Activated CD4-positive, alpha-beta memory T cell treated with anti-CD3 and anti-CD28 coated beads for 36 hours (primary cell): ENCODE measurements at regions of chr3 and their contacts with region 1.

Region 1: DNA sequence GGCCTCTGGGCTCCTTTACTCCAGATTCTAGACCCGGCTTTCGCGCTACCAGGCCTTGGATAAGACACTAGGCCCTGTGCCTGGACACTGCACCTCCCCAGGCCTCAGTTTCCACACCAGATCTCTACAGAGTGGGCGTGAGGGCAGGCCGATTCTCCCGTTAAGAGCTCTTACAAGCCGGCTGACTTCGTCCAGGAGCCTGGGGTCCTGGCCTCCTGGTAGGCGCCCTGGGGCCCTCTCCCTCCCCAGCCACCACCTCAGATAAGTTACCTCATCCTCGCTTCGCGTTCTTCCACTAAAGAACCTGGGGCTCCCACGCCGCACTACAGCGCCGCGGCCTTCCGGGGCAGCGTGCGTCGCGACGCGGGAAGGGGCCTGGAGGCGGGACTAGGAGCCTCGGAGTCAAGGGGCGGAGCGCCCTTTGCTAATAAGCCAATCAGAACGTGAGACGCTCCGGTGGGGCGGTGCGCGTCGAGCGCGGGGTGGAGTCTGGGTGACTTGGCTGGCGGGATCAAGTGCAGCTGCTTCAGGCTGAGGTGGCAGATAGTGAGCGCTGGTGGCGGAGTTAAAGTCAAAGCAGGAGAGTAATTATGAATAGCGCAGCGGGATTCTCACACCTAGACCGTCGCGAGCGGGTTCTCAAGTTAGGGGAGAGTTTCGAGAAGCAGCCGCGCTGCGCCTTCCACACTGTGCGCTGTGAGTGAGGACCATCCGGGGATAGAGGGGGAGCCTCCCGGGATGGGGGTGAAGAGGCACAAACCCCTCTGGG is at the starts of genes EAF2 and IQCB1:
- DNase-seq: peak; percentile 98
- H3K4me3 Mint-ChIP-seq: peak within 1 kb of the TSS; percentile 98
- H3K27ac Mint-ChIP-seq: peak within 1 kb of the TSS; percentile 84
- H3K4me1 Mint-ChIP-seq: peaks cover 37% of the 10 kb centered on the region
- H3K27me3 Mint-ChIP-seq: no peaks in the 10 kb centered on the region
- total RNA-seq, gene EAF2: 14.4 to 14.8 TPM
- total RNA-seq, gene IQCB1: 36.8 to 37.3 TPM

Region 2: GRCh38 chr3:120742198-120742849 is 1092.6 kb before region 1 on chr3 and contains the starts of genes GTF2E1 and RABL3:
- CTCF ChIA-PET with region 1: no interaction called
- POLR2A ChIA-PET with region 1: no interaction called
- intact Hi-C with region 1: loop called (anchors 2 kb)
- DNase-seq: peak; percentile 98
- H3K4me3 Mint-ChIP-seq: peak within 1 kb of the TSS; percentile 96
- H3K27ac Mint-ChIP-seq: peak within 1 kb of the TSS; percentile 94
- H3K4me1 Mint-ChIP-seq: peaks cover 28% of the 10 kb centered on the region
- H3K27me3 Mint-ChIP-seq: peaks cover 2% of the 10 kb centered on the region
- total RNA-seq, gene GTF2E1: 18.4 to 19.8 TPM
- total RNA-seq, gene RABL3: 28.7 to 30.0 TPM

Region 3: DNA sequence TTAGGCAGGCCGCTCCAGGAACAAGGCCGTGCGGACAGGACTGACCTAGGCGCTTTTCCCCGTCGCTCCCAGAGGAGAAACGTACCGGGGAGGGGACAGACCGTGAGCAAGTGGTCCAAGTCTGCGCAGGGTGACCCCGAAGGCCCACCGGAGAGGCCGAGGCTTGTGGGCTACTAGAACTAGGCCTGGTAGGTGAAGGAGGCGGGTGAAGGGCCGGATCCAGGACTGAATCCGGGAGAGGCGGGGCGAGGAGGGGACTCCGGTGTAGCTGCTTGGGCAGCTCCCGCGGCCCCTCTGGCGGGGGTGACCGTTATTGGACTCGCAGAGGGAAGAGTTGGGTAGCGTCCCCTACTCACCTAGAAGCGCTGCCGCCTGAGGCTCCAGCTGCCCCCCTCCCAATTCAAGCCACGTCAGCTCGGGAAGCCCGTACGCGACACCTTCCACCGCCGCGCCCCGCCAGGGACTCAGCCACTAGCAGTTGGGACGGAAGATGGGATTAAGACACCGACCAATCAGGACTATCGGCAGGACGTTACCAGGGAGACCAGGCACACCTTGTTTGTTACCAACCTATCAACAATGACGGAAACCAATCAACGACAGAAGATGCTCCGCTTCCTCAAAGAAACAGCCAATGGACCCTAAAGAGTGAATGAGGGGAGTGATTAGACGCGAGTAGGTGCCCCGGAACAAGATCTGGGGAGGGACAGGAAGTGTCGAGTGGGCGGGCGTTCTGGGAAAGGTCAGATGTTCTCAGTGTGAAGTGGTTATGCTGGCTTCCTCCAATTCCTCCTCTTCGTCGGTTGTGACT is 85.4 kb before region 1 on chr3 and contains the start of gene GOLGB1:
- CTCF ChIA-PET with region 1: interaction called, 3 read pairs
- POLR2A ChIA-PET with region 1: interaction called, 7 read pairs
- intact Hi-C with region 1: loop called (anchors 1 kb)
- DNase-seq: peak; percentile 97
- H3K4me3 Mint-ChIP-seq: no peak within 1 kb of the TSS
- H3K27ac Mint-ChIP-seq: no peak within 1 kb of the TSS
- H3K4me1 Mint-ChIP-seq: peaks cover 10% of the 10 kb centered on the region
- H3K27me3 Mint-ChIP-seq: no peaks in the 10 kb centered on the region
- total RNA-seq, gene GOLGB1: 22.7 to 26.0 TPM

Region 4: DNA sequence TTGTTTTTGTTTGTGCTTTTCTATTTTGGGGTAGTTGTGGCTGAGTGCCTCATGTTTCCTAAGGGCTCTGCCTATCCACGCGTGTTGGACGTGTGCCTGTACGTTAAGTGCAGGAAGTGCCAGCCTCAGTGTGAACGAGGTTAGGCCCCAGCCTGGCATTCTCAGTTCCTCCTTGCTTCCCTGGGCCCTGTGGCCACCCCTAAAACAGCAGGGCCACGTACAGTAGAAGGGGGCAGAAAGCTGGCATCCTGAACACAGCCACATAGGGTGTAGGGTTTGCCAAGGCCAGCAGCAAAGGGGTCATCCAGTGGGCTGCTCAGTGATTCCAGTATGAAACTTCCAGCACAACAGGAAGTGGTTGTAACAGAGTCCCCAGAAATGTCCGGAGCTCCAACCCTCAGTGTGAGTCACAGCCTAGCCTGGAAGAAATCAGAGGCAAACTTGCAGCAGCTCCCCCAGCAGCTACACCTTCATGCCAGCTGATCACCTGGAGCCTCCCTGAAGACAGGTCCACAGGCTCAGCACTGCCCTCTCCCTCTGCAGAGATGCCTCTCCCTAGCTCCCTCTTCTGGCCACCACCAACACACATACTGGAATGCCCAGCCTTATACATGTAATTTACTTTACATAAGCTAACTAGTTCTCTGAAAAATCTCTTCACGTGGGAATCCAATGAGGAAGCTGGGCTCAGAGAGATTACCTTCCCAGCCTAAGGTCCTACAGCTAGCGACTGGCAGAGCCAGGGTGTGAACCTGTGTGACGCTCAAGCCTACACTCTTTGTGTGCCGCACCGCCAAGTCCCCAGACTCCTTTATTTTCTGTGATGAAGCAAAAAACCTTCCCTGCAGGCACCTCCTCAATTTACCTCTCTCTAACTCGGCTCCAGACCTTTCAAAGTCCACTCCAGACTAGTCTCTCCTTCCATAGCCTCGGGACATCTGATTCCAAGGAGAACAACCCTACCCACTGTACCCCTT is 160.6 kb after region 1 on chr3:
- CTCF ChIA-PET with region 1: no interaction called
- POLR2A ChIA-PET with region 1: no interaction called
- intact Hi-C with region 1: loop called (anchors 5 kb)
- DNase-seq: peak; percentile 40
- H3K4me3 Mint-ChIP-seq: no peak overlapping the region
- H3K27ac Mint-ChIP-seq: no peak overlapping the region
- H3K4me1 Mint-ChIP-seq: peaks cover 29% of the 10 kb centered on the region
- H3K27me3 Mint-ChIP-seq: no peaks in the 10 kb centered on the region

Region 5: DNA sequence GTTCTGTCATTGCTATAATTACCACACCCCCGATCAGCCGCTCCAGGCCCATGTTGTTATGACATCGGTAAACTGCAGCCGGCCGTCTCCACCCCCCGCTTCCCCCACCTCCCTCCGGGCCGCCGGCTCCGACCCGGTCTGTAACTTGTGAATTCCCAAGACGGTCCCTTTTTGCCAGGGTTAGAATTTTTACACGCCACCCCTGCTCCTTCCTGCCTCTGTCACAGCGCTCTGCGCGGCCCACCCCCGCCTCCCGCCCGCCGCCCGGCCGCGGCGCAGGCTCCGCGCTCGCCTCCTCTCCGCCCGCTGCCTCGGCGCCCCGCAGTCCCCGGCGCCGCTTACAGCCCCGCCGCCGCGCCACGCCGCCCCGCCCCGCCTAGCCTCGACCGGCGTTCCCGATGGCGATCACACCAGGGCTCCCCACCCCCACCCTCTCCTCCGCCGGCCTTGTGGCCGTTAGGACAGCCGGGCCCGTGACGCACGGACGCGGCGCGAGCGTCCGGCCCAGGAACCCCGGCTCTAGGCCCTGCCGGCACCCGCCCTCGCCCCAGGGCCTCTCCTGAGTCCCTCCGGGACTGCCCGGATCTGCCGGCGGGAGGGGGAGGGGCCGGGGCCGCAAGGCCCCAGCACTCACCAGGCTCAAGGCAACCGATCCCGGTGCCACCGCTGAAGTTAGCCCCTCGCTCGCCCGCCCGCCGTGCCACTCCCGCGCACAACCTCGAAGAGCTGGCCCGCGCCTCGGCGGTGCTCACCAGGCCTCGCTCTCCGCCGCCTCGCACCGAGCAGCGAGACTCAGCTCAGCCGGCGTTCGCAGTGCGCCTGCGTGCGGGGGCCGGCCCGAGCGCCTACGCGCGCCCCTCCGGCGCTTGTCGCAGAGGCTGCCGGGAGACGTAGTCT is 679.5 kb after region 1 on chr3 and contains the start of gene KPNA1:
- CTCF ChIA-PET with region 1: no interaction called
- POLR2A ChIA-PET with region 1: no interaction called
- intact Hi-C with region 1: loop called (anchors 5 kb)
- DNase-seq: peak; percentile 91
- H3K4me3 Mint-ChIP-seq: peak within 1 kb of the TSS; percentile 77
- H3K27ac Mint-ChIP-seq: peak within 1 kb of the TSS; percentile 85
- H3K4me1 Mint-ChIP-seq: peaks cover 39% of the 10 kb centered on the region
- H3K27me3 Mint-ChIP-seq: no peaks in the 10 kb centered on the region
- total RNA-seq, gene KPNA1: 43.4 to 46.0 TPM